ENCODE measurements at regions of chr4 and their contacts with region 1.

Region 1: DNA sequence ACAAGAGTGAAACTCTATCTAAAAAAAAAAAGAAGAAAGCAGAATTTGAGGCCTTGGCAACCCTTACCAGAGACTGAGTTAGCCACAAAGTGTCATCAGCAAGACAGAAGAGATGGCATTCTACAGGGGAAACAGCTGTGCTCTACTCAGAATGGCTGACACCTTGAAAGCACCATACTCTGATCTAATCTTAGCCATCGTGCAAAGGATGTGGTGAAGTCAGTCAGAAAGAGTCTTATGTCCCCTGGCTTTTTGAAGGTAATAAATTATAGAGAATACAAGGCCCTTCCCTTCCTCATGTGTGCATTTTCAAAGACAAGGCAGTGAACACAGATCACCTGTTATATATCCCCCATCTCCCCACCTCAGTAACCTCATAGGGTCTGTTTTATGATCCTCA is 13.2 kb downstream of the CLNK start:
- DNase-seq: peak in 8 of 9 donors; percentile 28 to 89 (median 80)
- ATAC-seq: peak; percentile 95
- H3K4me3 ChIP-seq: no peak overlapping the region
- H3K4me3 Mint-ChIP-seq: peak overlapping the region in 8 of 10 donors; percentile 27 to 67 (median 43)
- H3K27ac ChIP-seq: peak overlapping the region; percentile 74
- H3K27ac Mint-ChIP-seq: peak overlapping the region; percentile 81 to 94 (median 89)
- H3K4me1 ChIP-seq: peaks cover 0 to 27% of the 10 kb centered on the region in 2 donors
- H3K4me1 Mint-ChIP-seq: peaks cover 3 to 42% (median 29%) of the 10 kb centered on the region in 7 donors
- H3K27me3 ChIP-seq: no peaks in the 10 kb centered on the region
- H3K27me3 Mint-ChIP-seq: no peaks in the 10 kb centered on the region

Region 2: DNA sequence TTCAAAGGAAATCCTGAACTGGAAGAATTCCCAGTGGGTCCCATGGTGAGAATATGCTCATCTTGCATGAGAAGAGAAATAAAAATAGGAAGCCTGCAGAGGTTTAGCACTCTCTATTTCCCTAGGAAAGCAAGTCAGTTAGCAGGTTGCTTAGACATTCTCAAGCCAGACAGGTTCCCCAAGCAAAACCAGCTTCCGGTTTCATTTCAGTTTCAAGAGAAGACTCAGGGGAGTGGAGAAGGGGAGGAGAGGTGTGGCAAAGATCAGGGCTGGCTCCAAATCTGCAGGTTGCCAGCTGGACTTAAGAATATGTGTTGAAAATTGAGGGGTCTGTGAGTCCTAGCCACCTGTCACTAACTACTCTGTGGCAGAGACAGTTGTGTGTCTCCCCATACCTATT is 94.3 kb before region 1 on chr4:
- CTCF ChIA-PET with region 1: no interaction called
- POLR2A ChIA-PET with region 1: no interaction called
- intact Hi-C with region 1: loop called in 1 of 2 experiments (anchors 5 kb)
- DNase-seq: peak in 4 of 9 donors; percentile 13 to 31 (median 26)
- ATAC-seq: no peak
- H3K4me3 ChIP-seq: no peak overlapping the region
- H3K4me3 Mint-ChIP-seq: peak overlapping the region in 6 of 10 donors; percentile 34 to 77 (median 64)
- H3K27ac ChIP-seq: no peak overlapping the region
- H3K27ac Mint-ChIP-seq: peak overlapping the region in 5 of 9 donors; percentile 33 to 93 (median 82)
- H3K4me1 ChIP-seq: no peaks in the 10 kb centered on the region
- H3K4me1 Mint-ChIP-seq: peaks cover 0 to 10% (median 2%) of the 10 kb centered on the region in 7 donors
- H3K27me3 ChIP-seq: no peaks in the 10 kb centered on the region
- H3K27me3 Mint-ChIP-seq: peaks cover 6 to 11% (median 8%) of the 10 kb centered on the region in 5 donors

Region 3: DNA sequence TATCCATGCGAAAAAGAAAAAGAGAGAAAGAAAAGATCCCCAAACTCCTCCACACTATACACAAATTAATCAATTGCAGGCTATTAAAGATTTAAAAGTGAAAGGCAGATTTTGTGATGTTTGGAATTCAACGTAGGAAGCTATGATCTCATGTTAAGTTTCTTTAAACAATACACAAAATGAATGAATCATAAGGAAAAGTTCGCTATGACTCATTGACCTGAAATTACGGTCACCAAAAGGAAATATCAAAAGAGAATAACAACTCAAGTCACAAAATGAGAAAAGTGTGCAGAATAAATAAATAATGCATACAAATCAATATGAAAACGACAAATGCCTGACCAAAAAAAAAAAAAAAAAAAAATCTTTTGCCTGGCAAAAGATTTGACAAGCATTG is 15.4 kb before region 1 on chr4:
- CTCF ChIA-PET with region 1: no interaction called
- POLR2A ChIA-PET with region 1: no interaction called
- intact Hi-C with region 1: loop called (anchors 1 to 2 kb)
- DNase-seq: no peak
- ATAC-seq: no peak
- H3K4me3 ChIP-seq: no peak overlapping the region
- H3K4me3 Mint-ChIP-seq: peak overlapping the region in 3 of 10 donors; percentile 10 to 24 (median 21)
- H3K27ac ChIP-seq: no peak overlapping the region
- H3K27ac Mint-ChIP-seq: peak overlapping the region in 2 of 9 donors; percentile 45 to 60
- H3K4me1 ChIP-seq: peaks cover 0 to 8% of the 10 kb centered on the region in 2 donors
- H3K4me1 Mint-ChIP-seq: peaks cover 5 to 41% (median 18%) of the 10 kb centered on the region in 7 donors
- H3K27me3 ChIP-seq: no peaks in the 10 kb centered on the region
- H3K27me3 Mint-ChIP-seq: no peaks in the 10 kb centered on the region

Region 4: DNA sequence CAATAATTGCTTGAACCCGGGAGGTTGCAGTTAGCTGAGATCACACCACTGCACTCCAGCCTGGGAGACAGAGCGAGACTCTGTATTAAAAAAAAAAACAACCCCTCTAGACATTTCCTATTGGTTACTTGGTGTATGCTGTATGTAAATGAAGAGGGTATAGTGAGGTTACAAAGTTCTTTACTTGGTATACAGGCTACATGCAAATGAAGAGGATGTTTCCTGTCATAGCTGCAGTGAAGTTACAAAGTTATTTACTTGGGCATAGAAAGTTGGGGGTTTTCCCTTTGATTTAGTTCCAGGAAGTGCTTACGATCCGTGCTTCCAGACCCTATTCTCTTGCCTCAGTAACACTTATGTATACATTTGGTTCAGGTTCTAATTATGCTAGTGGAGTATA is 51.6 kb after region 1 on chr4:
- CTCF ChIA-PET with region 1: no interaction called
- POLR2A ChIA-PET with region 1: no interaction called
- intact Hi-C with region 1: loop called (anchors 2 to 5 kb)
- DNase-seq: peak in 3 of 9 donors; percentile 6 to 24 (median 8)
- ATAC-seq: peak; percentile 42
- H3K4me3 ChIP-seq: no peak overlapping the region
- H3K4me3 Mint-ChIP-seq: peak overlapping the region in 1 of 10 donors; percentile 39
- H3K27ac ChIP-seq: no peak overlapping the region
- H3K27ac Mint-ChIP-seq: peak overlapping the region in 1 of 9 donors; percentile 51
- H3K4me1 ChIP-seq: no peaks in the 10 kb centered on the region
- H3K4me1 Mint-ChIP-seq: peaks cover 0 to 39% (median 2%) of the 10 kb centered on the region in 7 donors
- H3K27me3 ChIP-seq: no peaks in the 10 kb centered on the region
- H3K27me3 Mint-ChIP-seq: peaks cover 0 to 3% (median 2%) of the 10 kb centered on the region in 5 donors

Region 5: GRCh38 chr4:10730590-10730989 is 59.2 kb after region 1 on chr4:
- CTCF ChIA-PET with region 1: no interaction called
- POLR2A ChIA-PET with region 1: no interaction called
- intact Hi-C with region 1: loop called in 1 of 2 experiments (anchors 1 kb)
- DNase-seq: no peak
- ATAC-seq: no peak
- H3K4me3 ChIP-seq: no peak overlapping the region
- H3K4me3 Mint-ChIP-seq: peak overlapping the region in 1 of 10 donors; percentile 22
- H3K27ac ChIP-seq: no peak overlapping the region
- H3K27ac Mint-ChIP-seq: peak overlapping the region in 1 of 9 donors; percentile 64
- H3K4me1 ChIP-seq: no peaks in the 10 kb centered on the region
- H3K4me1 Mint-ChIP-seq: peaks cover 3 to 60% (median 8%) of the 10 kb centered on the region in 7 donors
- H3K27me3 ChIP-seq: no peaks in the 10 kb centered on the region
- H3K27me3 Mint-ChIP-seq: no peaks in the 10 kb centered on the region

Region 6: DNA sequence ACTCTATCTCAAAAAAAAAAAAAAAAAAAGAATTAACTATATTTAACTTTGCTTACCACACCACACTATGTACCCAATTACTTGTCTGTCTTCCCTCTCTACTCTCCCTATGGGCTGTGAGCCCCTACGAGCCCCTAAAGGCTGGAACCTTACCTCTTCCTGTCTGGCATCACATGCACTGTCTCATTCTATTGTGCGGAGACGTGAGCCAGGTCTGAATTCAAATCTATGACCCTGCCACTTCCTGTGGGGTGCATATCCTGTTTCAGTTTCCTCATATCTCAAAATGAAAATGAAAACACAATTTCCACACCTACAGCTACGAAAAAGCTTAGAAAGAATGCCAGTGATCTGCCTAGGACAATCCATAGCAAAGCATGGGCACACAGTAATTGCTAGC is 800.3 kb after region 1 on chr4:
- CTCF ChIA-PET with region 1: no interaction called
- POLR2A ChIA-PET with region 1: no interaction called
- intact Hi-C with region 1: loop called (anchors 1 to 5 kb)
- DNase-seq: peak; percentile 12 to 82 (median 75)
- ATAC-seq: peak; percentile 96
- H3K4me3 ChIP-seq: peak overlapping the region; percentile 66
- H3K4me3 Mint-ChIP-seq: peak overlapping the region; percentile 71 to 95 (median 90)
- H3K27ac ChIP-seq: peak overlapping the region; percentile 67
- H3K27ac Mint-ChIP-seq: peak overlapping the region; percentile 94 to 99 (median 96)
- H3K4me1 ChIP-seq: peaks cover 14 to 25% of the 10 kb centered on the region in 2 donors
- H3K4me1 Mint-ChIP-seq: peaks cover 28 to 61% (median 45%) of the 10 kb centered on the region in 7 donors
- H3K27me3 ChIP-seq: no peaks in the 10 kb centered on the region
- H3K27me3 Mint-ChIP-seq: peaks cover 0 to under 1% (median 0%) of the 10 kb centered on the region in 5 donors